AG04449 (cell line): ENCODE measurements at regions of chr9 and their contacts with region 1.

Region 1: DNA sequence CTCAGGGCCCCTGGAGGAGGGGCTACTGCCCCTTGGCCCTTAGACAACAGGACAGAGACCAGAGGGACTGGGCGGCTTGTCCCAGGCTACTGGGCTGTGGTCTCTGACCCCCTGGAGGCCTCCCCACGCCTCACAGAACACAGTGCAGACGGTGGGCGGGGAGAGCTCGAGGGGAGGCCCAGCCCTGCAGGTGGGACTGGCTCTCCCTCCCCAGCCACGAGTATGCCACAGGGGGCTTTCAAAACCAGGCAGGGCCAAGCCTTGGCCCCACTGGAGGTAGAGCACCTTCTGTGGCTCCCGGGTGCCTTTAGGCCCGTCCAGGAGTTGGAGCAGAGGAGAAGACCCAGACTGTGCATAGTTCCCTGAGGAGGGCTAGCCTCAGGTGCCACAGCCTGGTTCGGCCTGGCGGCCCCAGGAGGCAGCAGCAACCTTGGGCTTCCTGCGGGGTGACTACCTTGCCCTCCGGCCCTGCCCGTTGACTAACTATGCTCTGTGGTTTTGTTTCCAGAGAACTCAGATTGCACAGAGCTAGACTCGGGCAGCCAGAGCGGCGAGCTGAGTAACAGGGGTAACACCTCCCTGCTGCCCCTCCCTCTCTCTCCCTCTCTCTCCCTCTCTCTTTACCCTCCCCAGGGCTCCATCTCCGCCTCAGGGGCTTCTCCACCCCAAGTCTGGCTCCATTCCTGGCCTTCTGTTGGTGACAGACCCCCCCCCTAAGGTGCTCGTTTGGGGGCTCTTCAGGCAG is 15.5 kb downstream of the CARD19 start:
- DNase-seq: no peak
- H3K4me3 ChIP-seq: no peak overlapping the region
- CTCF ChIP-seq: no peak

Region 2: GRCh38 chr9:92934321-92934720 is 177.2 kb before region 1 on chr9:
- CTCF ChIA-PET with region 1: no interaction called
- POLR2A ChIA-PET with region 1: no interaction called
- DNase-seq: no peak
- H3K4me3 ChIP-seq: no peak overlapping the region
- CTCF ChIP-seq: no peak

Region 3: DNA sequence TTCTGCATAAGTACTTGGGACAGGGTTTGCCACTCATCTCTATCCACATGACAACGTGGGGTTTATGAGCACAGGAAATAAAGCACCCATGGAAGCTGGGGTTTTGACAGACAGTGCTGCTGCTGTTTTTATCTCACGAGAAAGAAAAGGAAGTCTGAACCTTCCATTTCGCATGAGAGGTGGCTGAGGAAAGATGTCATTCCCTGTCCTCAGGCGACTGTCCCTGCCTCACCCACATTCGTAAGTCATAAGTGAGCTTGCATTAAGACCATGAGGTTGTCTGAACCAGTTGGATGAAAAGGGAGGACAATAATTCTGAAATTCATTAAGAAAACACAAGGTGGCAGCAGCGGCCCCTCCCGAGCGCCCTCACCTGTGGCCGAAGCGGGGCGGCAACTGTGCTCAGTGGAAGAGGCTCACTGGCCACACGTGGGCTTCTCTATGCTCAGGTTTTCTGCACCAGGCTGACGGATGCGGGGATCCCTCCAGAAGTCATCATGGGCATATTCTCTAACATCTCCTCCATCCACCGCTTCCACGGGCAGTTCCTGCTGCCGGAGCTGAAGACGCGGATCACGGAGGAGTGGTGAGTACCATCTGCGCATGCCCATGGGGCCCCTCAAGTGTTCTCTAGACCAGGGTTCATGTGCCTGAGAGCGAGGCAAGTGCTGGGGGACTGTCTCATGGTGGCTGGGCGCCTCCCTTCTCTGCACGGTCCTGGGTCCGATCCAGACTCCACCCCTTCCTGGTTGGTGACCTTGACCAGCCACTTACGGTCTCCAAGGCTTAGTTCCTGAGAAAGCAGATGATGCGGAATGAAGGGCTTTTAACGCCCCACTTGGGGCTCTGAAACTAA is 107.8 kb before region 1 on chr9:
- CTCF ChIA-PET with region 1: interaction called, 12 read pairs
- POLR2A ChIA-PET with region 1: no interaction called
- DNase-seq: no peak
- H3K4me3 ChIP-seq: no peak overlapping the region
- CTCF ChIP-seq: peak; percentile 51

Region 4: GRCh38 chr9:93095205-93096130 is 16.1 kb before region 1 on chr9:
- CTCF ChIA-PET with region 1: interaction called, 43 read pairs
- POLR2A ChIA-PET with region 1: interaction called, 3 read pairs
- DNase-seq: peak; percentile 85
- H3K4me3 ChIP-seq: peak overlapping the region; percentile 57
- CTCF ChIP-seq: no peak

Region 5: DNA sequence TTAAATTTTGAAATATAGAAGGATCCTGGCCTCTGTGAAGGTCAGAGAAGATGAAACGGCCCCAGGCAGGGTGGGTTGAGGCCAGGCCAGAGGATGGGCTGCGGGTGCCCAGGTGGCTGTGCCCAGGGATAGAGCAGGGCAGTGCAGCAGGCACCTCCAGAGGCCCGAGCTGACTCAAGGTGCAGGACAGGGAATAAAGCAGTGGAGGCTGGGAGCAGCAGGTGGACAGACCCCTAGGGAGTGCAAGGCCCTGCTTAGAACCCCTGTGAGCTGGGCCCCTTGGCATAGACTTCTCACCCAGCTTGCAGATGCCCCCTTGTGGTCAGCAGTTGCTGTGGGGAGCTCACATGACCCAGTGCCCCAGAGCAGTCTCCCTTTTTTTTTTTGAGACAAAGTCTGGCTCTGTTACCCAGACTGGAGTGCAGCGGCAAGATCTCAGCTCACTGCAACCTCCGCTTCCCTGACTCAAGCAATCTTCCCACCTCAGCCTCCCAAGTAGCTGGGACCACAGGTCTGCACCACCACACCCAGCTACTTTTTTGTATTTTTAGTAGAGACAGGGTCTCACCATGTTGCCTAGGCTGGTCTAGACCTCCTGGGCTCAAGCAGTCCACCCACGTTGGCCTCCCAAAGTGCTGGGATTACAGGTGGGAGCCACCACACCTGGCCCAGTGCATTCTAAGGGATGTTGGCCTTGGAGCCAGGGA is 191.2 kb after region 1 on chr9:
- CTCF ChIA-PET with region 1: interaction called, 59 read pairs
- POLR2A ChIA-PET with region 1: no interaction called
- DNase-seq: peak; percentile 10
- H3K4me3 ChIP-seq: no peak overlapping the region
- CTCF ChIP-seq: peak; percentile 67

Region 6: GRCh38 chr9:93308158-93308602 is 196.6 kb after region 1 on chr9:
- CTCF ChIA-PET with region 1: interaction called, 59 read pairs
- POLR2A ChIA-PET with region 1: no interaction called
- DNase-seq: no peak
- H3K4me3 ChIP-seq: no peak overlapping the region
- CTCF ChIP-seq: no peak